Lower lobe of right lung (tissue), 2 donors: ENCODE measurements at regions of chr1 and their contacts with region 1.

Region 1: DNA sequence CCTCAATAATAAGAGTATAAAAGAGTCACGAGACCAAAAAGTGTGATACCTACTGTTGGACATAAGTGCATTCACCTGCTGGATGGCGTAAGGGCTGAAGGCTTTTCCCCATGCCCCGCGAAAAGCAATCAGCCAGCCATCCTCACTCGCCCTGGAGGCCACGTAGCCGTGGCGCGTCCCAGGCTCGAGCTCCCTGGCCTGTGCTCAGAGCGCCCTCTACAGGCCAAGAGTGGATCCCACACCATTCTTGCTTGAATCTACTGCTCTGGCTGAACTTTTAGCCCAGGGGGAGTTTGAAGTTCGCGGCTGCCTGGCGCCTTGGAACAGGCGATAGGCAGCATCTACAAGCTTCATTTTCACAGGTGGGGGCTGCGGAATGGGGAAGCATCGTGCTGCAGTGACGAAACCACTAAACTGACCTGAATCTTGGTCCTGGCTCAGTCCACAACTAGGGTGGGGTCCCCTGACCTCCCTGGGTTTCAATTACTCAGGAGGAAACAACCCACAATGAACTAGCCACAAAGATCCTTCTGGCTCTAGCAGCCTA is 70.3 kb upstream of the SERBP1 start:
- DNase-seq: peak; percentile 88
- ATAC-seq: peak; percentile 98 to 99
- H3K4me3 ChIP-seq: no peak overlapping the region
- H3K27ac ChIP-seq: no peak overlapping the region
- H3K4me1 ChIP-seq: peaks cover 7% of the 10 kb centered on the region
- H3K27me3 ChIP-seq: no peaks in the 10 kb centered on the region
- CTCF ChIP-seq: peak; percentile 99

Region 2: DNA sequence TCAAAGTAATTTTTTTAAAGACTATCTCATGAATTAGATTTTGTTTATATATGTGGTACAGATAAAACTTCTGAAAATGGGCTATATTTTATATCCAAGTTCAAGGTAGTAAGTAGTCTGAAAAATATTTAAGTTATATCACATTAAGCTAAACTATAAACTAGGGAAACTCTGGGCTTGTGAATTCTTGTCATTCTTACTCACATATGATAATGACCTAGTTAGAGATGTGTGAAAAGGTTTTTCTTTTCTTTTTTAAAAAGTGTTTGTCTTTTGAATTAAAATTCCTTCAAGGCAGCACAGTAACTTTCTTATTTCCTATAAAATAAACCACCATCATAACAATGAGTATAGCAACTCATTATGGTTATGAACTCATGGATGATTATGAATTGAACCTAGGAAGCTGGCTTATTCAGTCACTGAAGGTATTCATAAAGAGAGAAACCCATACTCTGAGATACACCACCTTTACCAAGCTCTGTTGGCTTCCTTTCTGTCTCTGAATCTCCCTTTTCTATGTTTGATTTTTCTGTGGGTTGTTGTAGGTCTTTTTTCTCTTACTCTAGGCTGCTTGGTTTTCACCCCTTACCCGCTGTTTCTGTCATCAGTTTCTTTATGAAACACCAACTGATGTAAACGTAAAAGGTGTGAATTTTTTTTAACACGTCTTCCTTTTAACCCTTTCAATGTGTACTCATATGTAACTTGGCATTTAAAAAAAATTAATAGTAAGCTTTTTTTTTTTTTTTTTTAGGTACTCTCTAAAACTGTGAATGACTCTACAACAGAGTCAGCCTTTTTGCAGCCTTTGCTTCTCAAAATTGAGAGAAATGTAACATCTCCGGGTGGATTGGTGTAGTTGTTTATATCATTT is 167.6 kb before region 1 on chr1:
- intact Hi-C with region 1: no loop called
- DNase-seq: no peak
- ATAC-seq: peak in 1 of 2 donors; percentile 36
- H3K4me3 ChIP-seq: no peak overlapping the region
- H3K27ac ChIP-seq: no peak overlapping the region
- H3K4me1 ChIP-seq: no peaks in the 10 kb centered on the region
- H3K27me3 ChIP-seq: no peaks in the 10 kb centered on the region
- CTCF ChIP-seq: no peak

Region 3: GRCh38 chr1:67355745-67356424 is 144.6 kb before region 1 on chr1:
- intact Hi-C with region 1: loop called (anchors 5 kb)
- DNase-seq: no peak
- ATAC-seq: peak in 1 of 2 donors; percentile 66
- H3K4me3 ChIP-seq: no peak overlapping the region
- H3K27ac ChIP-seq: no peak overlapping the region
- H3K4me1 ChIP-seq: no peaks in the 10 kb centered on the region
- H3K27me3 ChIP-seq: no peaks in the 10 kb centered on the region
- CTCF ChIP-seq: no peak

Region 4: GRCh38 chr1:67446893-67447292 is 53.6 kb before region 1 on chr1:
- intact Hi-C with region 1: no loop called
- DNase-seq: no peak
- ATAC-seq: peak in 1 of 2 donors; percentile 54
- H3K4me3 ChIP-seq: no peak overlapping the region
- H3K27ac ChIP-seq: no peak overlapping the region
- H3K4me1 ChIP-seq: no peaks in the 10 kb centered on the region
- H3K27me3 ChIP-seq: no peaks in the 10 kb centered on the region
- CTCF ChIP-seq: no peak

Region 5: DNA sequence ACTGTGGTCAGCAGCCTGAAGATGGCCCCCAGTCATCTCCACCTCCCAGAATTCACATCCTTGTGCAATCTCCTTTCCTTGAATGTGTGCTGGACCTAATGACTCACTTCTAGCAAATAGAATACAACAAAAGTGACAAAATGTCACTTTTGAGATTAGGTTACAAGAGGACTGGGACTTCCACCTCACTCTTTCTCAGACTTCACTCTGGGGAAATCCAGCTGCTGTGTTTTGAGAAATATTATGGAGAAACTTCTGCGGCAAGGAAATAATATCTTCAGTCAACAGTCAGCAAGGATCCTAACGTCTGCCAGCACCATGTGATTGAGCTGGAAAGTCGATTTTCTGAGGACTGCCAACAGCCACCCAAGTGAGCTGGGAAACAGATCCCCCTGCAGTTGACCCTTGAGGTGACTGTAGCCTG is 114.0 kb after region 1 on chr1:
- intact Hi-C with region 1: no loop called
- DNase-seq: no peak
- ATAC-seq: no peak
- H3K4me3 ChIP-seq: no peak overlapping the region
- H3K27ac ChIP-seq: no peak overlapping the region
- H3K4me1 ChIP-seq: peaks cover 15% of the 10 kb centered on the region
- H3K27me3 ChIP-seq: no peaks in the 10 kb centered on the region
- CTCF ChIP-seq: no peak